ENCODE measurements at regions of chr20 and their contacts with region 1.

Region 1: DNA sequence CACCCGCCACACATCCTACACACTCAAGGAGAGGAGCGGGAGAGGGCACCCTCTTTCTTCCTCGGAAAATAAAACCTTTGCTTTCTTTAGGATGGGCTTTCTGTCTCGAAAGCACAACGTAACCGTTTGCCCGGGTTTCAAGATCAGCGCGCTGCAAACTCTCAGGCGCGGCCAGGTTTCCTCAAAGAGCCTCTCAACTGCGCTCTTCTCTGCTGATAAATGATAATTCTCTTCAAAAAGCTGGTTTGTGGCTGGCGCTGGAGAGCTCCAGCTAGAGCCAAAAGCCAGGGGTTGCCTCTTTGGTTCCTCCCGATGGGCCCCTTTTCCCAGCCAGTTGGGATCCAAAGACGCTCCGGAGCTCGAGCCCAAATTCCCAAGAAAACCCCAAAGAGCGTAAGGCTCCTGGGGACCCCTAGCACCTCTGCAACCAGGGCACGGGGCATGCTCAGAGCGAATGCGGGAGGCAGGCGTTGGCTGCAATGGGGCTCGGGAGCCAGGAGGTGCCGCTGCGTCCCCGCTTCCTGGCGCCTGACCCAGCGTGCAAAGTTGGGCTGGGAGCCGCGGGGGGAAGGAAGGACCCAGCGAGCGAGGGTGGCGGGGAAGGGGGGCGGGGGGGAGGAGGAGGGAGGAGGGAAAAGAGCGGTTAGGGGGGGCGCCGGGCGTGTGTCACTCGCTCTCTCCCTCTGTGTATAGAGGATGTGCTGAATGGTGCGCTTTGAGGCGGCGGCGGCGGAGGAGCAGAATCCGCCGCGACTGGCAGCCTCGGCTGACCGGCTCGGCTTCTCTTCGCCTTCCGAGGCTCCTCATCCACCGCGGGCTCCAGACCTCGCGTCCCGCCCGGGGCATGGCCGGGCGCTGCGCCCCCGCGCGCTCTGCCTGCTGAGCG is at the start of gene PLCB1:
- DNase-seq: peak; percentile 73 to 90
- H3K4me3 ChIP-seq: peak within 1 kb of the TSS; percentile 61 to 66
- H3K27ac ChIP-seq: peak within 1 kb of the TSS; percentile 58 to 69
- H3K4me1 ChIP-seq: peaks cover 0 to 28% (median 15%) of the 10 kb centered on the region in 4 donors
- H3K27me3 ChIP-seq: peaks cover 0 to 10% of the 10 kb centered on the region in 2 donors
- CTCF ChIP-seq: peak; percentile 69 to 80

Region 2: DNA sequence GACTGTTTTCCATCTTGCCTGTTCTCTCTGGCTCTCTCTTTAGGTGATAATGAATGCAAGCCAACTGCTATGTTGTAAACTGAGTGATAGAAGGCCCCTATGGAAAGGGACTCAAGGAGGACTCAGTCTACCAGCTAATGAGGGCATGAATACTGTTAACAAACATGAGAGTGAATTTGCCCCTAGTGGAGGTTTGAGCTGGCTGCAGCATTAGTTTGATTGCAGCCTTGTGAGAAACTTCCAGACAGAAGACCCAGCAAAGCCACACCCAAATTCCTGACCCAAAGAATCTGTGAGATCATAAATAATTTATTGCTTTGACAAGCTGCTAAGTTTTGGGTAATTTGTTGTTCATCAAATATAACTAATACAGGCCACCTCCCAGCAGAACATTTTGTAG is 49.8 kb before region 1 on chr20:
- intact Hi-C with region 1: no loop called
- DNase-seq: no peak
- H3K4me3 ChIP-seq: no peak overlapping the region
- H3K27ac ChIP-seq: no peak overlapping the region
- H3K4me1 ChIP-seq: no peaks in the 10 kb centered on the region
- H3K27me3 ChIP-seq: no peaks in the 10 kb centered on the region
- CTCF ChIP-seq: no peak

Region 3: DNA sequence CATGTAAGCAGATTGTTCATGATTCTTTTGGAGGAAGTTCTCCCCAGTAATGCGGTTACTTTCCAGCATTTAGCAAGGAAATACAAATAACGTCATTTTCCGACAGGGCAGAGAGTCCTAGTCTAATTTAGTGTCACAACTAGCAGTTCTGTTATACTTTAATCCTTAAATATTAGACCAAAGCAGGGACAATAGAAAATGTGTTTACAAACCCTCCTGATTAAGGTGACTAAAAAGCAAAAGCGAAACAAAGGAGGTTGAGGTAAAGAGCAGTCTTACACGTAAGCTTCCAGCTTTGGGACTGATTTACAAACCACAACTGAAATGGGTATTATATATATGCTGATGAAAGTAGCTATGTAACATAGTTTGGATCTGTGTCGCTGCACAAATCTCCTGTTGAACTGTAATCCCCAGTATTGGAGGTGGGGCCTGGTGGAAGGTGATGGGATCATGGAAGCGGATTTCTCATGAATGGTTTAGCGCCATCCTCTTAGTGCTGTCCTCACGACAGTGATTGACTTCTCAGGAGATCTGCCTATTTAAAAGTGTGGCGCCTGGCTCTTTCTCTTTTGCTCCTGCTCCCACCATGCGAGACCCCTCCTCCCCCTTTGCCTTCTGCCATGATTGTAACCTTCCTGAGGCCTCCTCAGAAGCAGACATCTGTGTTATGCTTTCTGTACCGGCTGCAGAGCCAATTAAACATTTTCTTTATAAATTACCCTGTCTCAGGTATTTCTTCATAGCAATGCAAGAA is 82.2 kb after region 1 on chr20:
- intact Hi-C with region 1: no loop called
- DNase-seq: no peak
- H3K4me3 ChIP-seq: no peak overlapping the region
- H3K27ac ChIP-seq: no peak overlapping the region
- H3K4me1 ChIP-seq: peaks cover 0 to 22% (median 6%) of the 10 kb centered on the region in 4 donors
- H3K27me3 ChIP-seq: no peaks in the 10 kb centered on the region
- CTCF ChIP-seq: no peak

Region 4: DNA sequence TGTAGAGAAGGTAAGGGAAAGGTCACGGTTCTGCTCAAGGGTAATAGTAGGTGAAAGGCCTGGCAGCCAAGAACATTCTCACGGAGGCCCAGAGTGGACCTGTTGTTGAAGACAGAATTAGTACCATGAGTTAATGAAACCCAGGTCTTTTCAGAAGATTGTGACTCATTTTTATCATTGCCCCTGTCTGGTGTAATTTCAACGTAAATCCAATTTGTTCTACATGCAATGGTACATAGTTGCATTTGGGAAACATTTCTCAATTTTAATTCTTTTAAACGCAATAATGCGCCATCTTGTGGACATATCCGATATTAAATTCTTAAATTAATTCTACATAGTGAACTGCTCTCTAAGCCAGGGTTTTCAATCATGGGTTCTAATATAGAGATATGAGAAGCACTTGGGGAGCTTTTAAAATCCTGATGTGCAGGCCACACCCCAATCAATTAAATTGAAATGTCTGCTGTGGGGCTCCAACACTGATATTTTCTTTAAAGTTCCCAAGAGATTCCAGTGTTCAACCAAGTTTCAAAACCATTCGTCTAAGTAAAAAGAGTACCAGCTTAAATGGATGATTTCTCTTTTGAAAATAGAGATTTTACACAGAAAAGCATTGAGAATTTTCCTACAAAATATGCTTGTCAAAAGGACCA is 257.7 kb after region 1 on chr20:
- intact Hi-C with region 1: loop called (anchors 2 kb)
- DNase-seq: no peak
- H3K4me3 ChIP-seq: no peak overlapping the region
- H3K27ac ChIP-seq: peak overlapping the region; percentile 23
- H3K4me1 ChIP-seq: peaks cover 0 to 17% (median 6%) of the 10 kb centered on the region in 4 donors
- H3K27me3 ChIP-seq: no peaks in the 10 kb centered on the region
- CTCF ChIP-seq: peak; percentile 47 to 53